ENCODE measurements at regions of chr4 and their contacts with region 1.

Region 1: GRCh38 chr4:184649026-184649970 is at the starts of genes CASP3 and PRIMPOL:
- DNase-seq: peak; percentile 99
- total RNA-seq, gene CASP3: 21.7 TPM
- total RNA-seq, gene PRIMPOL: 8.3 TPM

Region 2: DNA sequence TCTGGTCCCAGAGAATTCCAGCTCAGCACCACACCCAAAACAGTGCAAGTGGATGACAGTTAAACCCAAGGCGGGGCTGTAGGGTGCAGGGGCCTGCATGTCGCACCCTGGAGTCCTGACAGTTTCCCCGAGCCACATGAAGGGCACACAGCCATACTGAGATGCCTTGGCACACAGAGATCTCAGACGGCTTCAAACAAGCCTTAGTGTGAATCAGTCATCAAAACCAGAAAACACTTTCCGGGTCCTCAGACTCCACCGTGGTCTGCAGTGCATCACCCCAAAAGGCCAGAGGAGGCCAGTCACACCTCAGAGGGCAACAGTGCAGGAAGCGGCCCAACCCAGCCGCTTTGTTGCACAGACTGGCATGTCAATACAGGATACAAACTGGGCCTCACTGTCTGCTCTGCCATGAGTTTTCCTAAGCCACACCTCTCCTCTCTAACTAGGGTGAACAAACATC is 367.0 kb before region 1 on chr4:
- intact Hi-C with region 1: loop called (anchors 10 kb)
- DNase-seq: no peak

Region 3: GRCh38 chr4:184733654-184734524 is 84.6 kb after region 1 on chr4 and contains the start of gene CENPU:
- intact Hi-C with region 1: loop called (anchors 2 kb)
- DNase-seq: peak; percentile 95
- total RNA-seq, gene CENPU: 1.5 TPM

Region 4: GRCh38 chr4:184805462-184806228 is 156.3 kb after region 1 on chr4:
- intact Hi-C with region 1: loop called (anchors 5 kb)
- DNase-seq: peak; percentile 93

Region 5: GRCh38 chr4:184825896-184826690 is 176.8 kb after region 1 on chr4 and contains the start of gene ACSL1:
- intact Hi-C with region 1: loop called (anchors 5 kb)
- DNase-seq: peak; percentile 96
- total RNA-seq, gene ACSL1: 98.6 TPM

Region 6: GRCh38 chr4:185142912-185143595 is 493.8 kb after region 1 on chr4 and contains the start of gene SLC25A4:
- intact Hi-C with region 1: loop called (anchors 10 kb)
- DNase-seq: peak; percentile 94
- total RNA-seq, gene SLC25A4: 1,443 TPM

Region 7: DNA sequence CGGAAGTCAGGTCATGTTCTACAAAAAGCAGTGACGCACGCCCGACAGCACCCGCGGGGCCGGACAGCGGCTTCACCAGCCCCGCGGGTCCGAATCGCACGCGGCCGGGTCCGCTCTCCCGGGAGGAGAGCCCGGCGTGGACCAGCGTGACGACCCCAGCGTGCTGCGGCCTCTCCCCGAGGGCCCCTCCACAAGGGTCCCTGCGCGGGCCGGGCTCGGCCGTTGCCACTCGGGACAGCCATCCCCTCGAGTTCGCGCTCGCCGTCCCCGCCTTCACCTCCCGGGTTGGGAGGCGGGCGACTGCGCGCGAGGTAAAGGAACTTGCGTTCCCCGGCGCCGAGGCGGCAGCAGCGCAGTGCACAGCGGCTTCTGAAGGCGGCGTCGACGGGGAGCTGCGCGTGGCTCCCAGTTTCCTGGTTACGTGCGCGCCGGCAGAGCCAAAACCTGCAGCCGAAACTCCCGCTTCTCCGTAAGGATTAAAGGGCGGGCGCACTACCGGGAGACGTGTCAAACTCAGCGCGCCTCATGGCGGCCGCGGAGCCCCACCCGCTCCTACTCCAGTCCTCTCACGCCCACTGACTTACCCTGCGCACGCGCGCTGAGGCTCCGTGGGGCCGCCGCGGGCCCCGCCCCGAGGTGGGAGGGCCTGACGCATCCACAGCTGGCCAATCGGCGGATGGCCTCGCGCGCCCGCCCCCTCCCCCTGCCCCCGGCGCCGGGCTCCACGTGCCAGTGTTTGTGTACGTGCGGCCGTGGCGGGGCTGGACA is 746.8 kb after region 1 on chr4:
- intact Hi-C with region 1: loop called (anchors 10 kb)
- DNase-seq: peak; percentile 98

Measured in cardiac septum (tissue), 1 donor.